GM13976 (cell line): ENCODE measurements at regions of chr17 and their contacts with region 1.

Region 1: GRCh38 chr17:48878918-48879898 is 13.4 kb upstream of the ATP5MC1 start:
- DNase-seq: peak; percentile 84
- CTCF ChIP-seq: peak; percentile 83

Region 2: GRCh38 chr17:48655913-48656312 is 223.3 kb before region 1 on chr17:
- in situ Hi-C with region 1: no loop called
- DNase-seq: no peak
- CTCF ChIP-seq: no peak

Region 3: DNA sequence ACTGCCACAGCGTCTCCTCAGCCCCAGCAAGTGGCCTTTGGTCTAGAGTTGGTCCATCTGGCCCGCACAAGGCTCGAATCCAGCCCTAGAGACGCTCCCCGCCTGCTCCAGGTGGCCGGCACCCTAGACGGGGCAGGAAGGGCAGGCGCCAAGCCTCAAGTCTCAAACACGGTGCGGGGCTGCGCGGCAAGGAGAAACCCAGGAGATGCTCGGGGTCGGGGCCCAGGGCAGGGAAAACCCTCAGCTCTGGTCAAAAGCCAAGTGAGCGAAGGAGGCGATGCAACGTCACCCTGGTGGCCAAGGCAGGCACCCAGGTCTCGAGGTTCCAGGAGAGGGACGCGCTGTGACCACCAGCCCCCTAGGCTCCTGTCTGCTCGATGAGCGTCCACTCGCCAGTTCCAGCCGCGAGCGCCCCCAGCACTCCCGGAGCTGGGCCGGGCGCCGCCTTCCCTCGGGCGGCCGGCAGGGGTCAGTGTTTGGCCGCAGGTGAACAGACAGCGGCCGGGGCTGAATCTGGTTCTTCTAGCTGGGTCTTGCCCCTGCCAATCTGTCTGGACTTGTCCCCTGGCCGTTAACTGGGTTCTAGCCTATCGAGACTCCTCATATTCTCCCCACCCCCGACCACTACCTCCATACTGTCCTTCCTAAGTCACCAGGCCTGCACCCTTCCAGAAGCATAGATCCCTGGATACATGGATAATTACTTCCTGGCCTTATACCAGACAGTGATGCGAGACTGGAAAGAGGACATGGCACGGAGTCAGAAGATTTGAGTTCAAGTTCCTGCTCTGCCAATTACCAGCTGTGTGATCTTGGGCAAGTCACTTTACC is 200.9 kb before region 1 on chr17:
- in situ Hi-C with region 1: loop called (anchors 10 kb)
- DNase-seq: peak; percentile 88
- CTCF ChIP-seq: peak; percentile 92

Region 4: DNA sequence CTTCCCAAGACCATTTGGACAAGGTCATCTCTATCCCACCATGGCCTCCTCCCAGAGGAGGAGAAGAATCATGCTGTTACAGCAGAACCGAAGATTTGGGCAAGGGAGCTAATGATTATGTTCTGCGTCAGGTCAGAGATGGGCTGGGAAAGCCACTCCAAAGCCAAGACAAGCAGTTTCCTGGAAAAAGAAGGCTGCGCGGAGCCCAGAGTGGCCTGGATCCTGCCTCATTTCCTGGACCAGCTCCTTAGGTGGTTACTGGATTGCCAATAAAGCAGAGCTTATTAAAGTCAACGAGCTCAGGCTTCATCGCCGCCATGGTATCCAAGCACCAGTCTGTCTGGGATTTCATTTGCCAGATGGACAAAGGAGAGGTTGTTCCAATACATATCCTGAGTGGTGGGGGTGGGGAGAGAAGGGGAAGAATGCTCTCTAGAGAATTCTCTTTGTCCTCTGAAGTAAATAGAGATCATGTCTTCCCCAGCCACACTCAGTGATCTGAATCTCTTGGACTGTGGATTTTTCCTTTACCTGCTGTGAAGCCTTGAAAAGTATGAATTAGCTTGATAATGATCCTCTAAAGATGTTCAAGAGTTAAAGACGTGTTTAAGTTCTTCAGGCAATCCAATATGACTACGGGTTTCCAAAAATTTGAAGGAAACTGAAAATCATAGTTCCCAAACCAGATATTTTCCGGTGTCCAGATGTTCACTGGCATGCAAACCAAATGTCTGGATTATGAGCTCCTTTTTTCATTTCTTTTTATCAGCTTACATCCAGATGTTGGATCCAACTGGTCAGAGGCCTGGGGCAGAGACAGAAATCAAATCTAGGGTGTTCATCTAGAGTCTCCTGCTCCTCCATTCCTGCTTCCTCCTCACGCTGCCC is 174.6 kb before region 1 on chr17:
- in situ Hi-C with region 1: no loop called
- DNase-seq: no peak
- CTCF ChIP-seq: no peak

Region 5: GRCh38 chr17:48804925-48805411 is 74.2 kb before region 1 on chr17:
- in situ Hi-C with region 1: loop called (anchors 5 kb)
- DNase-seq: peak; percentile 80
- CTCF ChIP-seq: peak; percentile 75

Region 6: GRCh38 chr17:49031965-49032928 is 153.0 kb after region 1 on chr17:
- in situ Hi-C with region 1: loop called (anchors 5 kb)
- DNase-seq: peak; percentile 87
- CTCF ChIP-seq: peak; percentile 58

Region 7: DNA sequence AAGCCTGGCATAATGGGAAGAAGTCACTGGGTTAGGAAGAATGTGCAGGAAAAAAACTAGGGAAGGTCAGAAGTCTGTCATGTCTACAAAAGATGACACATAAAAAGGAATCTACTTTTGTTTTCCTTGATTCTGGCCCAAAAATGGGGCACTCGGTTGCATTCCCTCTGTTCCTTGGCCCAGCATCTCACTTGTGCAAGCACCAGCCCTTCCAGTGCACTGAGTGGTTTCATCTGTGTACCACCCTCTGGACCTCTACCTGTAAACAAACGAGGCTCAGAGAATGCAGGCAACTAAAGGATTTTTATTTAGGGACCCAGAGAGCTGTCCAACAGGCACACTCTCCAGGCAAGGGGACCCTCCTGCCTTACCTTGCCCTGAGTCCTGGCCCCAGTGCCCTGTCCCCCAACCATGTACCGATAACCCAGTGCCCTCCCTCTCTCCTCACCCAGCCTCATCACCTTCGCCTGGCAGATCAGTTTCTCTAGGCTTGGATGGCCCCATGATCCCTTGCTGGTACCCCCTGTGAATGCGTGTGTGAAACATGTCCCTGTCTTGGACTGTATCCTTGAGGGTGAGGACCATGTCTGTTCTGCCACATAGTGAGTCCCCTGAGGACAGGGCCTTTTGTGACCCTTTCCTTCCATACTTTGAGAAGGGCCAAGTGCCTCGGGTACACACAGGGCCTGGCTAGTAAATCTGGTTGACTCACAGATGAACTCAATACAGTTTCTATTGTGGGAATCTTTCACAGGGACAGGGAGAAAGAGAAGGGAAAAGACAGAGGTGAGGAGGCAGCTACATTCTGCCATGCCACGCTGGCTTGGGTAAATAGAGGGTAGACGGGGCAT is 709.7 kb after region 1 on chr17:
- in situ Hi-C with region 1: no loop called
- DNase-seq: no peak
- CTCF ChIP-seq: no peak